Activated T-helper 1 cell treated with anti-CD3 and anti-CD28 coated beads, Interleukin-12 subunit alpha, Interleukin-12 subunit beta, Interleukin-2, Interleukin-4 antibody, amounts not matched to agents 30 ng/mL and 10 ng/mL and 1 ng/mL, durations not matched to agents 14 hours and 24 hours and 36 hours (primary cell): ENCODE measurements at regions of chr12 and their contacts with region 1.

Region 1: DNA sequence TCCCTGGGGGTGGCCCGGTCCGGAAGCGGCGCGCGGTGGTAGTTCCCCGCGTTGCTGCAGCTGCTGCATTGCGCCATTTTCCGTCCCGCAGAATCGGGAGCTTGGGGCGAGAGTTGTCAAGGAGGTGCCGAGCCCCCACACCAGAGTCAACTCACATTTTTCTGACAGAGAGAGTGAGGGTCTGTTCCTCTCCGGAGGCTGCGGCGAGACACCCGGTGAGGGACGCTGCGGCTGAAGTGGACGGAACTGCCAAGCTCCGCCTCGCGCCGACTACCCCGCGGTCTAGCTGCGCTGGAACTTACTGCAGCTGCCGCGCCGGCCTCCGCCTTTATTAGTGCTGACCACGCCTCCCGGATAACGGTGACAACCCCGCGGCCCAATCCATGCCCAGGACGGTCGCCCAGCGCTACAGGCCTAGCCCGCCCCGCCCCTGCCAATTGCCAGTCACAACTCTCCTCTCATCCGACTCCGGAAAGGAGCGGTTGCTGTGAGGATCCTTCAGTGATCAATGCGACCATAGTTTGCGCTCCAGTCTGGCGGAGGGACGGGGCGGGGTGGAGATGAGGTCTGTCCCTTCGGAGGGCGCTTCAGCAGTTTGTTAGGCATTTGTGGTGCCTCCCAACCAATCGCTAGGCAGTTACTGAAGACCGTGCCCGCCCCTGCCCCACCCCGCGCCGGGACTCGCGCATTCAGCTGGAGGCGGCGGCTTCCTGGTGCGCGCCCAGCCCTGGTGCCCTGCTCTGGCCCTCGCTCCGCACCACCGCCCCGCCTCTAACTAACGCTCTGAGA is at the start of gene VAMP1:
- DNase-seq: peak; percentile 97
- H3K4me3 Mint-ChIP-seq: peak within 1 kb of the TSS; percentile 93
- H3K27ac Mint-ChIP-seq: peak within 1 kb of the TSS; percentile 85
- H3K4me1 Mint-ChIP-seq: peaks cover 57% of the 10 kb centered on the region
- H3K27me3 Mint-ChIP-seq: peaks cover 1% of the 10 kb centered on the region
- total RNA-seq, gene VAMP1: 49.7 and 52.8 TPM in 2 replicates

Region 2: DNA sequence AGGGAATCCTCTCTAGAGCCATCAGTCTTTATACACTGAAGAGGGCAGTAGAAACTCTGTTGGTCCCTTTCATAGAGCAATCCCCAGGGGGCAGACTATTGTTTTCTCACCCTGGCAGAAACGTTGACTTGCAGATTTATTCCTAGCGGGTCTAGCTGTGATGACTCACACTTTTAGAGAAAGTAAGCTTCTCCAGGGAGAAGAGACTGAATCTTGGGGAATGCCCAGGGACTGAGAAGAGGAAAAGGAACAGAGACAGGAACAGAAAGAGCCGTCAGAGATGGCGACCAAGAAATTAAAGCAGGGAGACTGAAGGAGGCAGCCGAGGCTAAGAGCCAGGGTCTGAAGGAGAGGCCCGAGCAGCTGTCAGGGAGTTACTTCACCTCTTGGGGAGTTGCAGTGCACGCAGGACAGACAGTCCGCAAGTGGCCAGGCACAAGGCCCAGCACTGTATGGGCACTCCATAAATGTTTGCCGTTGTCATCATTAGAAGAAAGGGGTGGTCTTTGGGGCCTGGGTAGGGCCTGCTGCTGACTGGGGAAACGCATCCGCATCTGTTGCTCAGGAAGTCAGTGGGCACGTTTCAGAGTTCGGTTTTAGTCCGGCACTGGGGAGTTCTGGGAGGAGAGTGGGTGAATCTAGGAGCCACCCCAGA is 147.1 kb before region 1 on chr12:
- intact Hi-C with region 1: loop called (anchors 5 kb)
- DNase-seq: no peak
- H3K4me3 Mint-ChIP-seq: peak overlapping the region; percentile 71
- H3K27ac Mint-ChIP-seq: peak overlapping the region; percentile 90
- H3K4me1 Mint-ChIP-seq: peaks cover 31% of the 10 kb centered on the region
- H3K27me3 Mint-ChIP-seq: no peaks in the 10 kb centered on the region

Region 3: DNA sequence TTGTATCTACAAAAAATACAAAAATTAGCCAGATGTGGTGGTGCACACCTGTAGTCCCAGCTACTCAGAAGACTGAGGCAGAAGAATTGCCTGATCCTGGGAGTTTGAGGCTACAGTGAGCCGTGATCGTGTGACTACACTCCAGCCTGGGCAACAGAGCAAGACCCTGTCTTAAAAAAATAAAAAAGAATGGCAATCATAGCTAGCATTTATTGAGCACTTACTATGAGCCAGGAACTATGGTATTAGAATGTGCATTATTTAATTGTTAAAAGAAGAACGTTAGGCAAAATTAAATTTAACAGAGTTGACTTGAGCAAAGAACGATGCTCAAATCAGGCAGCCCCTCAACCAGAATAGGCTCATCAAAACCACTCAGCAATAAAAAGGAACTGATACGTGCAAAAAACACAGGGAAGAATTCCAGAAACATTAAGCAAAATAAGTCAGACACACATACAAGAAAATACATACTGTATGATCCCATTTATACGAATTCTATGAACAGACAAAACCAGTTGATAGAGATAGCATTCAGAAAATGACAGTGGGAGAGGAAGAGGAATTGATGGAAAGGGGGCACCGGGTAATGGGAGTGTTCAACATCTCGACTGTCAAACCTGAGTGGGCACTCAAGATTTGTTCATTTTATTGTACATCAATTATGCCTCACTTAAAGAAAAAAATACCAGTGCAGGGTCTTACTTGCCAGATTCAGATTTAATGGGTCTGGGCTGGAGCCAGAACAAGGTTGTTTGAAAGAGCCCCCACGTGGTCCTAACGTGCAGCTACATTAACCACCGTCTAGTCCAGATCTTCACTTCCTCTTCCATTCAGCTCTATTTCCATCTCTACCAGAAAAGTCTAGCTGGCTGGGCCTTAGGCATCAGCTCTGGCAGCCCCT is 103.3 kb before region 1 on chr12:
- intact Hi-C with region 1: loop called (anchors 2 kb)
- DNase-seq: no peak
- H3K4me3 Mint-ChIP-seq: no peak overlapping the region
- H3K27ac Mint-ChIP-seq: peak overlapping the region; percentile 3
- H3K4me1 Mint-ChIP-seq: peaks cover 20% of the 10 kb centered on the region
- H3K27me3 Mint-ChIP-seq: no peaks in the 10 kb centered on the region

Region 4: GRCh38 chr12:6377667-6377994 is 92.9 kb before region 1 on chr12:
- intact Hi-C with region 1: no loop called
- DNase-seq: no peak
- H3K4me3 Mint-ChIP-seq: no peak overlapping the region
- H3K27ac Mint-ChIP-seq: no peak overlapping the region
- H3K4me1 Mint-ChIP-seq: peaks cover 16% of the 10 kb centered on the region
- H3K27me3 Mint-ChIP-seq: peaks cover 17% of the 10 kb centered on the region

Region 5: DNA sequence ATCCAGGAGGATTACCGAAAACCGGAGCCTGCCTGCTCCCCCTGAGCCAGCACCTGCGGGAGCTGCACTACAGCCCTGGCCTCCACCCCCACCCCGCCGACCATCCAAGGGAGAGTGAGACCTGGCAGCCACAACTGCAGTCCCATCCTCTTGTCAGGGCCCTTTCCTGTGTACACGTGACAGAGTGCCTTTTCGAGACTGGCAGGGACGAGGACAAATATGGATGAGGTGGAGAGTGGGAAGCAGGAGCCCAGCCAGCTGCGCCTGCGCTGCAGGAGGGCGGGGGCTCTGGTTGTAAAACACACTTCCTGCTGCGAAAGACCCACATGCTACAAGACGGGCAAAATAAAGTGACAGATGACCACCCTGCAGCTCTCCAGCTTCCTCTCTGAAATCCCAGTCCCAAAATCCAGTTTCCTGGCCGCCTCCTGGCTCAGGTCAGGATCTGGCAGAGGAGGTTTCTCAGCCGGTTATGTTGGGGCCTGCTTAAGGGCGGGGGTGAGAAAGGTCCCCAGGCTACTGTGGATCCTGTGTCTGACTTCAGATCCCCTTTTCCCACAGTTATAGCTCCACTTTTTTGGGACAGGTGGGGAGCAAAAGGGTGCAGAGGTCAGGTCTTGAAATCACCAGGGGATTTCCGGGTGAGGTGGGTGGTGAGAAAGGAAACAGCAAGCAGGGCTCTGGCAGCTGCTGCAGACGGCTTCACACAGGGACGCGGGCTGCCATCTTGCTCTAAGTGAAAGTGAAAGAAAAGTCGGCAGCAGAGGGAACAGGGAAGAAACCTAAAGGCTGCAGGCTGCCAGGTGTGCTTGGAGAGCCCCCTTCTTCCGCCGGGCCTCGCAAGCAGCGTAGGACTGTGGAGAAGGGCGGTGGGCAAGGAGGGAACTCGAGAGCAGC is 19.0 kb before region 1 on chr12 and contains the start of gene TAPBPL:
- intact Hi-C with region 1: loop called (anchors 1 kb)
- DNase-seq: peak; percentile 79
- H3K4me3 Mint-ChIP-seq: peak within 1 kb of the TSS; percentile 98
- H3K27ac Mint-ChIP-seq: peak within 1 kb of the TSS; percentile 91
- H3K4me1 Mint-ChIP-seq: peaks cover 72% of the 10 kb centered on the region
- H3K27me3 Mint-ChIP-seq: no peaks in the 10 kb centered on the region
- total RNA-seq, gene TAPBPL: 34.1 and 34.3 TPM in 2 replicates

Region 6: DNA sequence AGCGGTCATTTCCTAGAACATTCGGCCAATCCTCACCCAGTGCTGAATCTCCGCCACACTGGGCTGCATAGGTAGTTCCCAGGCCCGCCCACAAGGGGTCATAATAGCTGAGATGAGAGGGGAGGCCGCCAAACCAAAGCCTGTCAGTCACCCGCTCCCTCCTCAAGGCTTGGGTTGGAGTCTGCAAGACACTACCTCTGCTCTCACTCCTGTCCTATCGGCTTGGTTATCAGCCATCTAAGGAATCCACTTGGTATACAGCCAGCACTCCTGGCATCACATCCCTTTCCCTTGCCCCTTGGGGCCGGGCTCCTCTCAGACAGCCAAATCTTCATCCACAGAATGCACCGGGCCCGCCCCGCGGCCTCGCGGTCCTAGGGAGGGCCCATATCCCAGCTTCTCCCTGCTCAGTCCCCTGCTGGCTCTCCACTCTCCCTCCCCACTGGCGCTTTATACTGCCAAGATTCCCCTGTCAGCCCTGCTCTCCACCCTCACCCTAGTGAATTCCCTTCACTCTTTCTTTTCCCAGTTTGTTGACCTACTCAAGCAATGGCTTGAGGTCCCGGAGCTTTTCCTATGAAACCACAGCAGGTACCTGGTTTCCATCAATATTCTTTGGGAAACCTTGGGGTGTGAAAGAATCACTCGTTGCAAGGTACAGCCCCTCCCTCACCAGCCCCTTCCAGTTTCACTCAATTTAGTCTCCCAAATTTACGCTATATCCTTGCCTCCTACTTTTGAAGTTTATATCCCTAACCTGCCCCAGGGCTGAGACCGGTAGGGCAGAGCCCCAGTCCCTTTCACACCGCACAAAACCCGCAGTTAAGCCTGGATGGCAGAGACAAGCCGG is 83.8 kb after region 1 on chr12:
- intact Hi-C with region 1: loop called (anchors 5 kb)
- DNase-seq: no peak
- H3K4me3 Mint-ChIP-seq: peak overlapping the region; percentile 88
- H3K27ac Mint-ChIP-seq: peak overlapping the region; percentile 61
- H3K4me1 Mint-ChIP-seq: peaks cover 36% of the 10 kb centered on the region
- H3K27me3 Mint-ChIP-seq: no peaks in the 10 kb centered on the region